SK-N-SH (cell line): ENCODE measurements at regions of chr6 and their contacts with region 1.

Region 1: GRCh38 chr6:159134701-159135364 is 34.4 kb upstream of the FNDC1 start:
- DNase-seq: peak; percentile 78
- H3K4me3 ChIP-seq: peak overlapping the region in 1 of 2 experiments; percentile 48; a peak in 1 of 4 replicates
- H3K27ac ChIP-seq: no peak overlapping the region
- H3K4me1 ChIP-seq: peaks cover 0 to 3% of the 10 kb centered on the region in 2 experiments; a peak in 1 of 4 replicates
- H3K27me3 ChIP-seq: peaks cover 21% of the 10 kb centered on the region; the same call in 1 of the 2 replicates
- CTCF ChIP-seq: peak; percentile 89
- EP300 ChIP-seq: no peak
- RAD21 ChIP-seq: peak; percentile 82

Region 2: DNA sequence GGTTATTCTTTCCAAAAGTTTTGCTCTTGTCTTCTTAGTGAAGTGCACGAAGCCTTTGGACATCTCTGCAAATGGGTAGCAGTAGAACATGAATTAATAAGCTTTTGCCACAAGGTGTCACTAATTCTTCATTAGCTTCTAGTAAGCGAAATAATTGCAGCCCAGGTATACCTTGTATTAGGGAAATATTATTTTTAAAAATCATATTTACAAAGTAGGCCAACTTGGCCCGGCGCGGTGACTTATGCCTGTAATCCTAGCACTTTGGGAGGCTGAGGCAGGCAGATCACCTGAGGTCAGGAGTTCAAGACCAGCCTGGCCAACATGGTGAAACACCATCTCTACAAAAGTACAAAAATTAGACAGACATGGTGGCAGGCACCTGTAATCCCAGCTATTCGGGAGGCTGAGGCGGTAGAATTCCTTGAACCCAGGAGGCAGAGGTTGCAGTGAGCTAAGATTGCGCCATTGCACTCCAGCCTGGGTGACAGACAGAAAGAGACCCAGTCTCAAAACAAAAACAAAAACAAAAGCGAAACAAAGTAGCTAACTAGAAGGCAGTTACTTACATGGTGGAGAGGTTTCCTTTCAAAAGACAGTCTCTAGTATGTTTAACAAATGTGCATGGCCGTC is 126.1 kb before region 1 on chr6:
- CTCF ChIA-PET with region 1: interaction called, 27 read pairs
- POLR2A ChIA-PET with region 1: no interaction called
- DNase-seq: peak; percentile 8
- H3K4me3 ChIP-seq: no peak overlapping the region
- H3K27ac ChIP-seq: no peak overlapping the region
- H3K4me1 ChIP-seq: peaks cover 0 to 7% of the 10 kb centered on the region in 2 experiments; a peak in 1 of 4 replicates
- H3K27me3 ChIP-seq: no peaks in the 10 kb centered on the region
- CTCF ChIP-seq: peak; percentile 58
- EP300 ChIP-seq: no peak
- RAD21 ChIP-seq: peak; percentile 50

Region 3: DNA sequence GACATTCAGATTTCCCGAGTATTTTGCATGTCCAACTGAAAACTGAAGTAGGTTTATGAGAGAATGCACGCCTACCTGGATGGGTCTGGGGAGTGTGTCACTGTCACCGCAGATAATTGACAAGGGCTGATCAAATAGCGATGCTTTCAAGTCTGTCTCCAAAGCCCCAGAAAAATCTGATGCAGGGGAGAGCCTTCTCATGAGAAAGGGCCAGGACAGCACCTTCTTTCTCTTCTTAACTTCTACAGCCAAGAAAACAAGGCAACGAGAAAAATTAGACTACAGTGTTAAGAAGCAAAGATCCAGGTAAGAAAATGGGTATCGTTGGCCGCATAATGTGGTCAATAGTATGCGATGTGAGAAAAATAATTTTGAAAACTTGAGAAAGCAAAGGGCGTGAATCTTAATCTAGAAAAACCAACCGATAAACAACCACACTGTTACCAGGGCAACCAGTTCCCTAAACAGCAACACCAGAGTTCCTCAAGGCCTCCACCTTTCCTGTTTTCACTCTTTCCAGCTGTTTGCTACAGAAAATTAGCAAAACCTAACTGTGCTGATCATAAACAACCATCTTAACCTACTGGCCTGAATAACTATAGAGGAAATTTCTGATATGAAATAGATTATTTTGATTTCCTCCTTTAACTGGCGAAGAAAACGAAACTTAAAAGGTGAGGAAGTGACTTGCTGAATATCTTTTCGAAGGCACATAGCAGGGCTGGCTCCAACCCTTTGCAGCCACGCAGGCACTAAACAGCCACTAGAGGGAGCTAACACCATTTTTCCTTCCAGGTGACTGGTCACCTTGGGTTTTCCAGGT is 92.6 kb before region 1 on chr6:
- CTCF ChIA-PET with region 1: interaction called, 43 read pairs
- POLR2A ChIA-PET with region 1: no interaction called
- DNase-seq: peak; percentile 68
- H3K4me3 ChIP-seq: no peak overlapping the region
- H3K27ac ChIP-seq: no peak overlapping the region
- H3K4me1 ChIP-seq: peaks cover 0 to 2% of the 10 kb centered on the region in 2 experiments; a peak in 1 of 4 replicates
- H3K27me3 ChIP-seq: peaks cover 37% of the 10 kb centered on the region
- CTCF ChIP-seq: peak; percentile 97
- EP300 ChIP-seq: no peak
- RAD21 ChIP-seq: peak; percentile 74

Region 4: DNA sequence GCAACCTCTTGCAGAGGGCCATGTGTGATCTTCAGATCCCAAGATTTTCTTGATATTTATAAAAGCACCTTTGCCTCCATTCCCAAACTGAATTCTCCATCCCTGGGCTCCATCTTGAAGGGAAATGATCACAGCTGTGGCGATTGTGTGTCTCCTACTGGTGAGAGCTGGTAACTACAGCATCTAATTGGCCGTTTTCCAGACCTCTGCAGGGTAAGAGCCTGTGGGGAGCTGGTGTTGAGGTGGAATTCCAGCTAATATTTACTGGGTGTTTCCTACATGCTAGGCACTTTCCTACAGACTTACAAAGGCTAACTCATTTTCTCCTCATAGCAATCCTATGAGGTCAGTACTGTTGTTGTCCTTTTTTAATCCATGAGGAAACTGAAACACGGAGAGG is 24.8 kb before region 1 on chr6:
- CTCF ChIA-PET with region 1: interaction called, 26 read pairs
- POLR2A ChIA-PET with region 1: no interaction called
- DNase-seq: peak; percentile 55
- H3K4me3 ChIP-seq: no peak overlapping the region; a peak in 1 of 4 replicates
- H3K27ac ChIP-seq: no peak overlapping the region
- H3K4me1 ChIP-seq: no peaks in the 10 kb centered on the region
- H3K27me3 ChIP-seq: no peaks in the 10 kb centered on the region; the same call in 1 of the 2 replicates
- CTCF ChIP-seq: peak; percentile 62
- EP300 ChIP-seq: no peak
- RAD21 ChIP-seq: peak; percentile 50

Region 5: GRCh38 chr6:159116343-159116742 is 18.5 kb before region 1 on chr6:
- CTCF ChIA-PET with region 1: interaction called, 20 read pairs
- POLR2A ChIA-PET with region 1: no interaction called
- DNase-seq: no peak
- H3K4me3 ChIP-seq: no peak overlapping the region
- H3K27ac ChIP-seq: no peak overlapping the region
- H3K4me1 ChIP-seq: no peaks in the 10 kb centered on the region
- H3K27me3 ChIP-seq: peaks cover 16% of the 10 kb centered on the region; the same call in 1 of the 2 replicates
- CTCF ChIP-seq: no peak
- EP300 ChIP-seq: no peak
- RAD21 ChIP-seq: no peak

Region 6: GRCh38 chr6:159151266-159151855 is 16.5 kb after region 1 on chr6:
- CTCF ChIA-PET with region 1: interaction called, 72 read pairs
- POLR2A ChIA-PET with region 1: no interaction called
- DNase-seq: peak; percentile 60
- H3K4me3 ChIP-seq: no peak overlapping the region
- H3K27ac ChIP-seq: no peak overlapping the region
- H3K4me1 ChIP-seq: no peaks in the 10 kb centered on the region
- H3K27me3 ChIP-seq: peaks cover 24% of the 10 kb centered on the region; the same call in 1 of the 2 replicates
- CTCF ChIP-seq: peak; percentile 85
- EP300 ChIP-seq: no peak
- RAD21 ChIP-seq: peak; percentile 32; the same call in 1 of the 2 replicates

Region 7: DNA sequence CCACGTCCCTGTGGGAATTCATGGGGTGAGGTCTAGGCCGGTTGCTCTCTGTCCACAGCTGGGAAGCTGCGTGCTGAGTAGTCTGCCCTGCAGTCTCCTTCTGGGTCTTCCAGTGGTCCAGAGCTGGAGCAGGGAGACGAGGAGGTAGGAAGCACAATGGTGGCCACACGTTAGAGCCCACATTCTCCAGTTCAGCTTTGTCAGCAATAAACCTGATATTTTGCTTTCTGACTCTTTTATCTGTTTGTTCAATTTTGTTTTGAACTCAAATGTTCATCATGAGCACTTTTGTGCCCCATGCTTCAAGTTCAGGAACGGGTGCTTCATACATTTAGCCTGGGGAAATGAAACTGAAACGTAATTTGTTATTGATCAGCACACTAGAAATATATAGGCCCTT is 55.6 kb after region 1 on chr6:
- CTCF ChIA-PET with region 1: no interaction called
- POLR2A ChIA-PET with region 1: no interaction called
- DNase-seq: no peak
- H3K4me3 ChIP-seq: no peak overlapping the region
- H3K27ac ChIP-seq: no peak overlapping the region
- H3K4me1 ChIP-seq: no peaks in the 10 kb centered on the region
- H3K27me3 ChIP-seq: peaks cover 10% of the 10 kb centered on the region; the same call in 1 of the 2 replicates
- CTCF ChIP-seq: no peak
- EP300 ChIP-seq: no peak
- RAD21 ChIP-seq: no peak